Heart right ventricle (tissue), 16 donors: ENCODE measurements at regions of chr20 and their contacts with region 1.

Region 1: GRCh38 chr20:1108437-1108920 is 9.9 kb upstream of the PSMF1 start:
- DNase-seq: peak; percentile 43 to 45
- ATAC-seq: peak in 7 of 8 donors; percentile 34 to 81 (median 70)
- H3K4me3 ChIP-seq: no peak overlapping the region
- H3K27ac ChIP-seq: no peak overlapping the region
- H3K4me1 ChIP-seq: no peaks in the 10 kb centered on the region
- H3K27me3 ChIP-seq: no peaks in the 10 kb centered on the region
- CTCF ChIP-seq: peak; percentile 51 to 84 (median 75)

Region 2: DNA sequence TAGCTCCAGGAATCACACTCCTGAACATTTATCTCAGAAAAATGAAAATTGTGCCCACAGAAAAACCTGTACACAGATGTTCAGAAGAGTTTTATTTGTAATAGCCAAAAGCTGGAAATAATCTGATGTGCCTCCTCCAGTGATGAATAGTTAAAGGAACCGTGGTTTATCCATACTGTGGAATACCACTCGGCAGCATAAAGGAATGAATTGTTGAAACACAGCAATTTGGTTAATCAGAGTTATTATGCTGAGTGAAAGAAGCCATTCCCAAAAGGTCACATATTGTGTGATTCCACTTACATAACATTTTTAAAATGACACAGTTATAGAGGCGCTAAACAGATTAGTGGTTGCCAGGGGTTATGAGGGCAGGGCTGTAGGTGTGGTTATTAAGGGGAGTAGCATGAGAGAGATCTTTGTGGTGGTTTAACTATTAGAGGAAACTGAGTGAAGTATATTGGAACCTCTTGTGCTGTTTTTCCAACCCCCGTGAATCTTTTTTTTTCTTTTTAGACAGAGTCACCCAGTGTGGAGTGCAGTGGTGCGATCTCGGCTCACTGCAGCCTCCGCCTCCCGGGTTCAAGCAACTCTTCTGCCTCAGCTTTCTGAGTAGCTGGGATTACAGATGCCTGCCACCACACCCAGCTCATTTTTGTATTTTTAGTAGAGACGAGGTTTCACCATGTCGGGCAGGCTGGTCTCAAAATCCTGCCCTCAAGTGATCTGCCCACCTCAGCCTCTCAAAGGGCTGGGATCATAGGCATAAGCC is 36.1 kb after region 1 on chr20:
- intact Hi-C with region 1: loop called in 1 of 10 experiments (anchors 1 kb)
- DNase-seq: no peak
- ATAC-seq: peak in 4 of 8 donors; percentile 55 to 62 (median 60)
- H3K4me3 ChIP-seq: no peak overlapping the region
- H3K27ac ChIP-seq: no peak overlapping the region
- H3K4me1 ChIP-seq: peaks cover 0 to 18% (median 5%) of the 10 kb centered on the region in 9 donors
- H3K27me3 ChIP-seq: no peaks in the 10 kb centered on the region
- CTCF ChIP-seq: no peak